ENCODE measurements at regions of chr10 and their contacts with region 1.

Region 1: GRCh38 chr10:7525314-7526016 is 114.6 kb upstream of the SFMBT2 start:
- H3K4me3 ChIP-seq: no peak overlapping the region
- H3K27ac ChIP-seq: no peak overlapping the region
- H3K4me1 ChIP-seq: no peaks in the 10 kb centered on the region
- CTCF ChIP-seq: peak; percentile 66

Region 2: DNA sequence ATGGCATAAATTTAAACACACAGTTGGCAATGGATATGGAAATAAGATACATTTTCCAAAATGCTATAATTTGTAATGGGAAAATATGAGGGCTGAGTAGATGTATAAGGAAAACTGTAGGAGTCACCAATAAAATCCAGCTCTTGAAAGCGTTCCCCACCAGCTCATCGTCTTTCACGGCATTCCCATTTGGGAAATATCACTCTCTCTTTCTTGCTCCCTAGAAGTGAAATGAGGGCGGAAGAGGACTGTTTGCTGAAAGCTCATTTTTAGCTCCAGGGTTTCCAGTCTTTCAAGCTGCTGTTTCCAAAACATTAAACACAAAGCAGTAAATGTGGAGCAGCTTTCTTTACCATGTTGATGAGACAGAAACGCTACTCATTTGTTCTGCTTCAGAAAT is 10.0 kb before region 1 on chr10:
- CTCF ChIA-PET with region 1: interaction called, 13 read pairs
- POLR2A ChIA-PET with region 1: no interaction called
- H3K4me3 ChIP-seq: no peak overlapping the region
- H3K27ac ChIP-seq: no peak overlapping the region
- H3K4me1 ChIP-seq: peaks cover 3% of the 10 kb centered on the region
- CTCF ChIP-seq: no peak

Region 3: DNA sequence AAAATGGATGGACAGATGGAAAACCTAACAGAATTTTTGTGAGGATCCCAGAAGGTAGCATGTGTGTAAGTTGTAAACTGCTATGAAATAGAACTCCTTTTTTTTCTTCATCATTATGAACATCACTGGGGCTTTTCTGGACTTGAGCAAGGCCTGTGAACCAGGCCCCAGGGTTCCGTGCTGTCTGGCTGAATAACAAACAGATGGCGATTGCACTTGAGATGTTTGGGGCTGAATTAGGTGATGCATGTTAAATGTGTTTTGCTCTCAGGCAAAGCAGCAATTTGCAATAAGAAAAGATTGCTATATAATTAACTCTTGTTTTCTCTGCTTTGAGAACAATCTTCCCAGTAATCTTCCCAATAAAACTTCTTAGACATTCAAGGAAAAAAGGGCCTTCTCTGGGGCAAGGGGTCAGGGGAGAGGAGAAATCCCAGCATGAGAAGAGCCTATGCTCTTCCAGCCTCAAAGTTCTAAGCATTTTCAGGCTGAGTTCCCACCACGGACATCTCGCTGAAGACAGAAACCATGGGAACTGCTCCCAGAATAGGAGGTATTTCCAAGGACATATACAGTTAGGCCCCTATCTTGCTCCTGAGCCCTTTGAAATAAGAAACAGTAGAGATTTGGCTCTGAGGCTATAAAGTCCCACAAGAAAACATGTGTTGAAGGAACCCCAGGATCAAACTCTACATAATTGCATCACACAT is 42.6 kb after region 1 on chr10:
- CTCF ChIA-PET with region 1: no interaction called
- POLR2A ChIA-PET with region 1: no interaction called
- H3K4me3 ChIP-seq: no peak overlapping the region
- H3K27ac ChIP-seq: no peak overlapping the region
- H3K4me1 ChIP-seq: no peaks in the 10 kb centered on the region
- CTCF ChIP-seq: no peak

Region 4: GRCh38 chr10:7687228-7687907 is 161.9 kb after region 1 on chr10:
- CTCF ChIA-PET with region 1: interaction called, 91 read pairs
- POLR2A ChIA-PET with region 1: interaction called, 4 read pairs
- H3K4me3 ChIP-seq: no peak overlapping the region
- H3K27ac ChIP-seq: no peak overlapping the region
- H3K4me1 ChIP-seq: no peaks in the 10 kb centered on the region
- CTCF ChIP-seq: peak; percentile 84

Region 5: DNA sequence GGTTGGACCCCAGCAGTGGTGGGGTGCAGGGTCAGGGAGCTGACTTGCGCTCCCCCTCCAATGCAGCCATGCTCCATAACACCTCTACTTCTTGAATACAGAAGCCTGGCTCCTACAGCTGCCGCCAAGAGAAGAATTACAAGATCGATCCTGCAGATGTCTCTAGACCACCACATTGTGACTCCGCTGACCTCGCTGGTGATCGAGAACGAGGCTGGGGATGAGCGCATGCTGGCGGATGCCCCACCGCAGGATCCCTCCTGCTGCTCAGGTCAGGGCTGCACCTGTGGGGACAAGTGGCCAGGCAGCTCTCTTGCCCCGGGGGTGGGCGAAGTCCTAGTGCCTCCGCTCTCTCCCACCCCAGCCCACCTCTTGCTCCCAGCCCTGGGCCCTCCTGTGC is 209.4 kb after region 1 on chr10:
- CTCF ChIA-PET with region 1: no interaction called
- POLR2A ChIA-PET with region 1: no interaction called
- H3K4me3 ChIP-seq: no peak overlapping the region
- H3K27ac ChIP-seq: no peak overlapping the region
- H3K4me1 ChIP-seq: no peaks in the 10 kb centered on the region
- CTCF ChIP-seq: no peak

Region 6: GRCh38 chr10:7872041-7872442 is 346.6 kb after region 1 on chr10:
- CTCF ChIA-PET with region 1: interaction called, 10 read pairs
- POLR2A ChIA-PET with region 1: no interaction called
- H3K4me3 ChIP-seq: peak overlapping the region; percentile 33
- H3K27ac ChIP-seq: no peak overlapping the region
- H3K4me1 ChIP-seq: peaks cover 23% of the 10 kb centered on the region
- CTCF ChIP-seq: no peak; the same call in 1 of the 2 replicates

Region 7: GRCh38 chr10:9209105-9209798 is 1683.8 kb after region 1 on chr10:
- CTCF ChIA-PET with region 1: interaction called, 11 read pairs
- POLR2A ChIA-PET with region 1: no interaction called
- H3K4me3 ChIP-seq: no peak overlapping the region
- H3K27ac ChIP-seq: no peak overlapping the region
- H3K4me1 ChIP-seq: no peaks in the 10 kb centered on the region
- CTCF ChIP-seq: no peak; the same call in 1 of the 2 replicates

Region 8: GRCh38 chr10:9302120-9302746 is 1776.8 kb after region 1 on chr10:
- CTCF ChIA-PET with region 1: interaction called, 15 read pairs
- POLR2A ChIA-PET with region 1: no interaction called
- H3K4me3 ChIP-seq: no peak overlapping the region
- H3K27ac ChIP-seq: no peak overlapping the region
- H3K4me1 ChIP-seq: peaks cover 5% of the 10 kb centered on the region
- CTCF ChIP-seq: 0 out of 2 replicates have a peak, but pooled peaks have one; percentile 21

Measured in HEK293 (cell line).